CD4-positive, alpha-beta T cell (primary cell): ENCODE measurements at regions of chr3 and their contacts with region 1.

Region 1: DNA sequence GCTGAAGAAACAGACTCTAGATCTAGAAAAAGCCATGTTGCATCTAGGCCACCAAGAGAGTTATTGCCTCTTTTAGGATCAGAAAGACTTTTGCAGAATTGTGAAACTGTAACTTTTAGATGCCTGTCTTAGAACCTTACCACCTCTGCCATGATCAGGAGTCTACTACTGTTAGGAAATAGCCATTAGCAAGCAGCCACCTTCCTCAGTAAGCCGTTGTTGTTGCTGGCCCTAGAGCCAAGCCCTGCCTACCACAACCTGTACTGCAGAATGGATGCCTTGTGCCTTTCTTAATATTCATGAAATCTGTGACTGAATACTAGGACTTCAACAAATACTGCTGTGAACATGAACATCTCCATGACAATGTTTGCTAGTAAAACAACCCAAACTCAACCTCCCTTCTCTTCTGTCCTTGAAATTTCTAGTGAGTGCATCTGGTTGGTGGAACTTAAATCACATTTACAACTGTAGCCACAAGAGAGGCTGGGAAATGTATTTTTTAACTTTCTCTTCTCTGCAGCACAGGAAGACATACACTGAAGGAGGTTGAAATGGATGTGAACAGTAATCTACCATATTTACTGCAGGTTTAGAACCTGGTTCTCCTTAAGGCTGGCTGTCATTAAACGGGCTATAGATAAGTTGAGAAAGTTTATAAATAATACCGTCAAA is 20.7 kb downstream of the RASA2 start:
- DNase-seq: no peak
- ATAC-seq: peak; percentile 59
- H3K4me3 ChIP-seq: no peak overlapping the region
- H3K4me3 Mint-ChIP-seq: peak overlapping the region; percentile 11
- H3K27ac ChIP-seq: no peak overlapping the region
- H3K27ac Mint-ChIP-seq: peak overlapping the region; percentile 67
- H3K4me1 ChIP-seq: peaks cover 30% of the 10 kb centered on the region
- H3K4me1 Mint-ChIP-seq: peaks cover 57% of the 10 kb centered on the region
- H3K27me3 ChIP-seq: no peaks in the 10 kb centered on the region
- H3K27me3 Mint-ChIP-seq: no peaks in the 10 kb centered on the region
- CTCF ChIP-seq: no peak

Region 2: GRCh38 chr3:141523615-141524375 is 16.3 kb after region 1 on chr3:
- CTCF ChIA-PET with region 1: interaction called, 3 read pairs
- POLR2A ChIA-PET with region 1: no interaction called
- intact Hi-C with region 1: loop called in 1 of 2 experiments (anchors 2 kb)
- DNase-seq: no peak
- ATAC-seq: no peak
- H3K4me3 ChIP-seq: no peak overlapping the region
- H3K4me3 Mint-ChIP-seq: no peak overlapping the region
- H3K27ac ChIP-seq: no peak overlapping the region
- H3K27ac Mint-ChIP-seq: peak overlapping the region; percentile 94
- H3K4me1 ChIP-seq: peaks cover 25% of the 10 kb centered on the region
- H3K4me1 Mint-ChIP-seq: peaks cover 90% of the 10 kb centered on the region
- H3K27me3 ChIP-seq: no peaks in the 10 kb centered on the region
- H3K27me3 Mint-ChIP-seq: no peaks in the 10 kb centered on the region
- CTCF ChIP-seq: no peak

Region 3: GRCh38 chr3:141625506-141625905 is 118.0 kb after region 1 on chr3:
- CTCF ChIA-PET with region 1: no interaction called
- POLR2A ChIA-PET with region 1: no interaction called
- intact Hi-C with region 1: no loop called
- DNase-seq: no peak
- ATAC-seq: no peak
- H3K4me3 ChIP-seq: no peak overlapping the region
- H3K4me3 Mint-ChIP-seq: no peak overlapping the region
- H3K27ac ChIP-seq: no peak overlapping the region
- H3K27ac Mint-ChIP-seq: no peak overlapping the region
- H3K4me1 ChIP-seq: no peaks in the 10 kb centered on the region
- H3K4me1 Mint-ChIP-seq: no peaks in the 10 kb centered on the region
- H3K27me3 ChIP-seq: no peaks in the 10 kb centered on the region
- H3K27me3 Mint-ChIP-seq: no peaks in the 10 kb centered on the region
- CTCF ChIP-seq: no peak